Endothelial cell of umbilical vein (primary cell): ENCODE measurements at regions of chr1 and their contacts with region 1.

Region 1: DNA sequence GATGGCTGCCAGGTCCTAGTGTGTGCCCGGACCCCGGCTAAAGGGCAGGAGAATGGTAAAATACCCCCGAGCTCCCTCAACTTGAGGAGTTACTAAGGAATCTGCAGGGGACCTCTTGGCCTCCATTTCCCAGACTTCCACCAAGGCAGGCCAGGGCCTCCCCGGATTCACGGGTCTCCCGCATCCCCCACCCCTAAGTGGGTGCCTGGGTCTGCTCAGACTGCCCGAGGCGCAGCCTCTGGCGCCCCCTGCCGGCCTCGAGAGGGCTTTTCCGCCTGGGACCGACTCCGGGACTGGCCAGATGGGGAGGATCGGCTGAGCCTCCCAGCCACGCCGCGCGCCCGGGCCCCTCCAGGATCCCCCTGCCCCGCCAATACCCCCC is 1.7 kb downstream of the PLEKHG5 start:
- DNase-seq: peak; percentile 71
- H3K4me3 ChIP-seq: peak overlapping the region; percentile 26 to 62 (median 43)
- H3K27ac ChIP-seq: peak overlapping the region; percentile 86
- H3K4me1 ChIP-seq: peaks cover 44% of the 10 kb centered on the region
- H3K27me3 ChIP-seq: no peaks in the 10 kb centered on the region
- CTCF ChIP-seq: peak; percentile 90 to 97
- POLR2A ChIP-seq: no peak

Region 2: DNA sequence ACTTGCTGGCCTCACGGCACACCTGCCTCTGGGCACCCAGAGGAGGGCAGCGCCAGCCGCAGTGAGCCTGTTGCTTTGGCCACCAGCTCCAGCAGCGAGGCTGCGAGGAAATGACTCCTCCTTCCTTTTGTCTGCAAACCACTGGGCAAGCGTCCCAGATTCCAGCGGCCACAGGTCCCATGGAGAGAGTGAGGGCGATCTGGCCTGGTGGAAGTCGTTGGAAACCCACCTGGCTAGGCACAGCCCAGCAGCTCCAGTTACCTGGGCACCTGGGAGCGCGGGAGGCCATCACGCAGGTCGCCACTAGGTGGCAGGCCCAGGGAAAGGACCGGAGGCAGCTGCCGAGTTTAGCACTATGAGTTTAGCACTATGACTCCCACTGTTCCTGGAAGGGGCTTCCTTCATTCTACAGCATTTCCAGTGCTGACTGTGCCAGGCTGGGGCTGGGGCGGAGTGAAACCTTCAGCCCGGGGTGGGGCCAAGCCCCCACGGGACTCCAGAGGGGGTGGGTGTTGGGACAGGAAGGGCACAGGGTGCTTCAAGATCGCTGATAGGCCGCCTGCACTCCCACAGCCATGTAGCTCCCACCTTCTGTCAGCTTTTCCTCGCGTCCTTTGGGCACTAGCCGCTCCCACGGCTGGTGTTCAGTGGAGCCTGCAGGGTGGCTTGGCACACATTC is 66.3 kb before region 1 on chr1:
- CTCF ChIA-PET with region 1: no interaction called
- POLR2A ChIA-PET with region 1: interaction called, 5 read pairs
- dilution Hi-C with region 1: no loop called
- intact Hi-C with region 1: loop called (anchors 1 kb)
- DNase-seq: peak; percentile 75
- H3K4me3 ChIP-seq: peak overlapping the region in 1 of 3 experiments; percentile 9
- H3K27ac ChIP-seq: peak overlapping the region; percentile 83
- H3K4me1 ChIP-seq: peaks cover 35% of the 10 kb centered on the region
- H3K27me3 ChIP-seq: peaks cover 0 to 7% of the 10 kb centered on the region in 2 experiments
- CTCF ChIP-seq: peak; percentile 49 to 73
- POLR2A ChIP-seq: peak; percentile 31

Region 3: DNA sequence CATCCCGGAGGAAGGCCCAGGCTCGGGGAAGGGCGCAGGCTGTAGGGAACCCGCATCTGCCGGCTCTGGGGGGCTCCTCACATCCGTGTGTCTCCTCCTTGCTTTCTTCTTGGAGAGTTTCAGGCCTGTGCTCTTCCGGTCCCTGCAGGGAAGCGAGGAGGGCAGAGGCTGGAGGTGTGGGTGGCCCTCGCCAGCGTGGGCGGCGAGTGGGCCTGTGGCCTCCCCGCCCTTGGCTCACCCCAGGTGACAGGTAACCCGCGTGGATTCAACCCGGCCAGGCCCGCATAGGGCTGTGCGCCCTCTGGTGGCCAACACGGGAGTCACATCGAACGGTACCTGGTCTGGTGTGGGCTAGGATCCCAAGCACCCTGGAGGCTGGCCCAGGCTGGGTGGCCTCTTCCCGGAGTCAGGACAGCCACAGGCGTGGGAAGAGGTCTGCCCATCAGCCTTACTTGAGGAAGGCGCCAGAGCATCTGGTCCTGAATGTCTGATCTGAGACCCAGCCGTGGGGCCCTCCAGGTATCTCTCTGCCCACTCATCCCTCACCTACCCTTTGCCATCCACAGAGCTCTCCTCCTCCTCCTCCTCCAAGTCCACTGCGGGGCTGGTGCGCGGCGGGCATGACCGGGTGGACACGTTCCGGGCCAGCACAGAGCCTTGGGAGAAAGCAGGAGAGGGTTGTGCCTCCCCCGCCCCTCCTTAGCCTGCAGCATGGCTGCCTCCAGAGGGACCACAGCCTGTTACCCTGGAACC is 14.2 kb before region 1 on chr1:
- CTCF ChIA-PET with region 1: interaction called, 16 read pairs
- POLR2A ChIA-PET with region 1: no interaction called
- dilution Hi-C with region 1: no loop called
- intact Hi-C with region 1: loop called (anchors 1 kb)
- DNase-seq: no peak
- H3K4me3 ChIP-seq: no peak overlapping the region
- H3K27ac ChIP-seq: no peak overlapping the region
- H3K4me1 ChIP-seq: no peaks in the 10 kb centered on the region
- H3K27me3 ChIP-seq: no peaks in the 10 kb centered on the region
- CTCF ChIP-seq: peak; percentile 93 to 95
- POLR2A ChIP-seq: no peak

Region 4: GRCh38 chr1:6523566-6523965 is 33.8 kb after region 1 on chr1:
- CTCF ChIA-PET with region 1: interaction called, 113 read pairs
- POLR2A ChIA-PET with region 1: interaction called, 3 read pairs
- dilution Hi-C with region 1: no loop called
- intact Hi-C with region 1: loop called (anchors 1 kb)
- DNase-seq: peak; percentile 47
- H3K4me3 ChIP-seq: no peak overlapping the region
- H3K27ac ChIP-seq: no peak overlapping the region
- H3K4me1 ChIP-seq: no peaks in the 10 kb centered on the region
- H3K27me3 ChIP-seq: no peaks in the 10 kb centered on the region
- CTCF ChIP-seq: peak; percentile 58 to 59
- POLR2A ChIP-seq: no peak

Region 5: DNA sequence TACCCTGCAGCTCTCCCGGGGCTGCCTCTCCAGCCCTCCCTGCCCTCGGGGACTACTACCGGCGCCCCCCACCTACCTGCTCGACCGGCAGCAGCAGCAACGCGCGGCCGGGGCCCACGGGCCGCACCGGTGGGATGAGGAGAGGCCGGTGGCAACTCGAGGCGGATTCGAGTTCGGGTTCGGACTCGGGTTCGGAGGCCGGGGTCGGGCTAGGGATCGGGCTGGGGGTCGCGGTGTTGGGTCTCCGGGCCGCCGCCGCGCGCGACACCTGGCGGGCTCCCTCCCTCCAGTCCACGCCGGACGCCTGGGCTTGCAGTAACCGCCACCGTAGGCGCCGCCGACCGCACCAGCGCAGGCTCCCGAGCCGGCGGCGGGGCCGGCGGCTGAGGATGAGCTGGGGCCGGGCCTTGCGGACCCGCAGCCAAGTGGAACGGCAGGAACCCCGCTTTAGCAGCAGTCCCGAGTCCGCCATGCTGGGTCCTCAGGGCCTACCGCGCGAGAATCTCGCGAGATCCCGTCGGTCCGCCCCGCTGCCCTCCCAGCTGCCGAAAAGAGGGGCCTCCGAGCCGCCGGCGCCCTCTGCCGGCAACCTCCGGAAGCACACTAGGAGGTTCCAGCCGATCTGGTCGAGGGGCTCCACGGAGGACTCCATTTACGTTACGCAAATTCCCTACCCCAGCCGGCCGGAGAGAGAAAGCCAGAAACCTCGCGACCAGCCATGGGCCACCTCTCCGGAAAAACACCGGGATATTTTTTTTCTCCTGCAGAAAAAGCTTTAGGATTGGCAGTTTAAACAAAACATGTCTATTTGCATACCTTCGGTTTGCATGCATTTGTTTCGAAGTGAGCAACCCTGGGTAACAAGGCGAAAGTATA is 64.5 kb after region 1 on chr1 and contains the start of gene NOL9:
- CTCF ChIA-PET with region 1: interaction called, 4 read pairs
- POLR2A ChIA-PET with region 1: no interaction called
- dilution Hi-C with region 1: no loop called
- intact Hi-C with region 1: loop called (anchors 1 kb)
- DNase-seq: peak; percentile 94
- H3K4me3 ChIP-seq: peak within 1 kb of the TSS; percentile 61 to 100 (median 100)
- H3K27ac ChIP-seq: peak within 1 kb of the TSS; percentile 68
- H3K4me1 ChIP-seq: peaks cover 9% of the 10 kb centered on the region
- H3K27me3 ChIP-seq: no peaks in the 10 kb centered on the region
- CTCF ChIP-seq: peak; percentile 93 to 99
- POLR2A ChIP-seq: peak; percentile 84
- total RNA-seq, gene NOL9: 39.7 and 42.9 TPM in 2 replicates

Region 6: DNA sequence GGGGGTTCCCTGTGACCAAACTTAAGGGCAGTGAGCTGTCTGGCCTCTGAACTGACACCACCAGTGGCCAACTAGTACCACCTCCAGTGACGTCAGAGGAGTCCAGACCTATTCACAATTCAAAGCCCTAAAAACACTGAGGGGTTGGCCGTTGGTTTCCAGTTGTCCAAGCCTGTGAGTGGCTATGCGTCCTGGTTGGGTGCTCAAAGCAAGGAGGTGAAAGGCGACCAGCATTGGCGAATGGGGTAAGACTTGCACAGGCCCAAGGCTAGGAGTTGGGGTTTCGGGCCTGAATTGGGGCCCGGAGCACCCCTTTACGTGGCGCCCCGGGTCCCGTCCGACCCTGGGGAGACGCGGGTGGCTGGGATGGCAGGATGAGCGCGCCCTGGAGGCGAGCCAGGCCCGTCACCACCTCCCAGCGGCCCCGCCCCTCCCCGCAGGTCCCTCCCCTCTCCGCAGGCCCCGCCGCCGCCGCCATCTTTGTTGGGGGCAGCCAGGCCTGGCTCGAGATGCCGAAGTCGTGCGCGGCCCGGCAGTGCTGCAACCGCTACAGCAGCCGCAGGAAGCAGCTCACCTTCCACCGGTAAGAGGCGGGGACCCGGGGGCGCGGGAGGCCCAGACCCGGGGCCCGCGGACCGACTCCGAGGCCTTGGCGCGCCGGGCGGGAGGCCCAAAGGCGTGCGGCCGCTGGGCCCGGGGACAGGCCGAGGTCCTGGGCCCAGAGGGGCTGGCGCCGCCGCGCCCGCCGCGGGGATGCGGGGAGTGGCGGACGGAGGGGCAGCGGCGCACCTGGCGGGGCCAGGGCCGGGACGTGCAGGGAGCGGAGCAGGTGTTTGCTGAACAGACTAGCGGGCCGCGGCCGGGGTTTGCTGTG is 135.2 kb after region 1 on chr1 and contains the start of gene THAP3:
- CTCF ChIA-PET with region 1: interaction called, 3 read pairs
- POLR2A ChIA-PET with region 1: no interaction called
- dilution Hi-C with region 1: no loop called
- intact Hi-C with region 1: loop called (anchors 5 kb)
- DNase-seq: peak; percentile 82
- H3K4me3 ChIP-seq: peak within 1 kb of the TSS; percentile 54 to 72 (median 58)
- H3K27ac ChIP-seq: peak within 1 kb of the TSS; percentile 13
- H3K4me1 ChIP-seq: peaks cover 4% of the 10 kb centered on the region
- H3K27me3 ChIP-seq: no peaks in the 10 kb centered on the region
- CTCF ChIP-seq: no peak
- POLR2A ChIP-seq: no peak
- total RNA-seq, gene THAP3: 15.2 and 16.7 TPM in 2 replicates

Region 7: GRCh38 chr1:6686294-6686693 is 196.5 kb after region 1 on chr1:
- CTCF ChIA-PET with region 1: no interaction called
- POLR2A ChIA-PET with region 1: no interaction called
- dilution Hi-C with region 1: no loop called
- intact Hi-C with region 1: no loop called
- DNase-seq: no peak
- H3K4me3 ChIP-seq: no peak overlapping the region
- H3K27ac ChIP-seq: no peak overlapping the region
- H3K4me1 ChIP-seq: peaks cover 11% of the 10 kb centered on the region
- H3K27me3 ChIP-seq: no peaks in the 10 kb centered on the region
- CTCF ChIP-seq: no peak
- POLR2A ChIP-seq: no peak

Region 8: DNA sequence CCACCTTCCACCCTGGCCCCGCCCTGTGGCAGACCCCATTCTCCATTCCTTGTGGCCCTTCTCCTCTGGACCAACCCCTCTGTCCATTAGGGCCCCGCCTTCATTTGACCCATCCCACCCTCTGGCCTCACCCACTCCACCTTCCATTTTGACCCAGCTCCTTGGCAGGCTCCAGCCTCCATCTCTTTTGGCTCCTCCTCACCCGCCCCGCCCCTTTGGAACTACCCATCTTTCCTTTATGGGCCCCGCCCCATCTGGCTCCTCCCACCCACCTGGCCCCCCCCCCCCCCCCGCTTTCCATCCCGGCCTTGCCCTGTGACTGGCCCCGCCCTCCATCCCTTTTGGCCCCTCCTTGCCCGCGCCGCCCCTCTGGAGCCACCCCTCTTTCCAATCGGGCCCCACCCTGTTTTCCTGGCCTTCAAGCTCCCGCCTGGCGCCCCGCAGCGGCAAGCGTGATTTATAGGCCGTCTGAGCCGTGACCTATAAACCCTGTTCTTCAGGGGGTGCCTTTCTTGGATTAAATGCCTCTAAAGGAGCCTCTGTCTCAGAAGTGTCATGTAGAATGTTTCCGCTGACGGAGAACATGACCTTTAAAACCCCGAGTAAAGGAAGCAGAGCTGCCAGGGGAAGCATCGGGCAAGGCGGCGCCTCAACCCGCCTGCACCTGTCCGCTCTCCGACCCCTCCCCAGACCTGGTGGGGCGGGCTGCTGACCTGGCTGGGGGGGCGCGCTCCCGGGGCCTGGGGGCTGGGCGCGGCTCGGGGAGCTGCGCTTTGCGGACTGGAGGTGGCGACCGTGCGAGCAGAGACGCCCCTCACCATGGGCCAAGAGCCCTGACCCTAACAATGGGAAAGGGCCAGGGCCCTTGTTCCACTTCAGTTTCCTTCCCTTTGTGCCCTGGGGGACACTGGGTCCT is 473.5 kb after region 1 on chr1:
- CTCF ChIA-PET with region 1: no interaction called
- POLR2A ChIA-PET with region 1: no interaction called
- dilution Hi-C with region 1: no loop called
- intact Hi-C with region 1: no loop called
- DNase-seq: peak; percentile 30
- H3K4me3 ChIP-seq: no peak overlapping the region
- H3K27ac ChIP-seq: no peak overlapping the region
- H3K4me1 ChIP-seq: no peaks in the 10 kb centered on the region
- H3K27me3 ChIP-seq: peaks cover 0 to 6% of the 10 kb centered on the region in 2 experiments
- CTCF ChIP-seq: no peak
- POLR2A ChIP-seq: no peak